Calu3 (cell line): ENCODE measurements at regions of chr1 and their contacts with region 1.

Region 1: GRCh38 chr1:243708210-243708609 is 141.8 kb downstream of the AKT3 start:
- DNase-seq: no peak
- H3K4me3 Mint-ChIP-seq: no peak overlapping the region
- H3K27ac Mint-ChIP-seq: no peak overlapping the region
- H3K4me1 Mint-ChIP-seq: peaks cover 17% of the 10 kb centered on the region
- H3K27me3 Mint-ChIP-seq: no peaks in the 10 kb centered on the region
- CTCF ChIP-seq: peak; percentile 53

Region 2: GRCh38 chr1:242870966-242871365 is 837.2 kb before region 1 on chr1:
- CTCF ChIA-PET with region 1: no interaction called
- intact Hi-C with region 1: no loop called
- DNase-seq: no peak
- H3K4me3 Mint-ChIP-seq: no peak overlapping the region
- H3K27ac Mint-ChIP-seq: no peak overlapping the region
- H3K4me1 Mint-ChIP-seq: no peaks in the 10 kb centered on the region
- H3K27me3 Mint-ChIP-seq: no peaks in the 10 kb centered on the region
- CTCF ChIP-seq: no peak

Region 3: GRCh38 chr1:243748706-243749283 is 40.6 kb after region 1 on chr1:
- CTCF ChIA-PET with region 1: interaction called, 3 read pairs
- intact Hi-C with region 1: loop called (anchors 1 kb)
- DNase-seq: peak; percentile 45
- H3K4me3 Mint-ChIP-seq: no peak overlapping the region
- H3K27ac Mint-ChIP-seq: no peak overlapping the region
- H3K4me1 Mint-ChIP-seq: no peaks in the 10 kb centered on the region
- H3K27me3 Mint-ChIP-seq: no peaks in the 10 kb centered on the region
- CTCF ChIP-seq: peak; percentile 67

Region 4: GRCh38 chr1:243946946-243947345 is 238.7 kb after region 1 on chr1:
- CTCF ChIA-PET with region 1: no interaction called
- intact Hi-C with region 1: loop called (anchors 2 kb)
- DNase-seq: peak; percentile 58
- H3K4me3 Mint-ChIP-seq: no peak overlapping the region
- H3K27ac Mint-ChIP-seq: no peak overlapping the region
- H3K4me1 Mint-ChIP-seq: peaks cover 25% of the 10 kb centered on the region
- H3K27me3 Mint-ChIP-seq: no peaks in the 10 kb centered on the region
- CTCF ChIP-seq: peak; percentile 59